MCF 10A (cell line): ENCODE measurements at regions of chr10 and their contacts with region 1.

Region 1: DNA sequence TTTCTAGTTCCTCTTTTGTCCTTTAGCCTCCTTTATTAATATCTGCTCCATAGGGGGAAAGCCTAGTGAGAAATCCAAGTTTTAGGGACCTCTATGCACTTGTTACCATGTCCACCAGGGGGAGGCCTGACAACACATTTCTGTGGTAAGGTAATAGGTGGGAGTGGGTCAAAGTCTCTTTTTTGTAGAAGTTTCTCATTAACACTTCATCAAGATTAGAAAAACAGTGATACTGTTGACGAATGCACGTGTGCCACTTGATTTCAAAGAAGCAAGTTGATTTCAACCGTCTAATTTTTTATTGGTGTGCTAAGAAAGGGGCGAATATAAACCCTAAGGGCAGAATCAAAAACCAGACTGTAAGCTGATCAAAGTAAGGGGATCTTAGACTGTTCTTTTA is 30.6 kb downstream of the CISD1 start:
- DNase-seq: peak; percentile 80
- H3K4me3 Mint-ChIP-seq: no peak overlapping the region
- H3K27ac Mint-ChIP-seq: no peak overlapping the region
- H3K4me1 Mint-ChIP-seq: no peaks in the 10 kb centered on the region
- H3K27me3 Mint-ChIP-seq: peaks cover 40% of the 10 kb centered on the region
- CTCF ChIP-seq: peak; percentile 76

Region 2: DNA sequence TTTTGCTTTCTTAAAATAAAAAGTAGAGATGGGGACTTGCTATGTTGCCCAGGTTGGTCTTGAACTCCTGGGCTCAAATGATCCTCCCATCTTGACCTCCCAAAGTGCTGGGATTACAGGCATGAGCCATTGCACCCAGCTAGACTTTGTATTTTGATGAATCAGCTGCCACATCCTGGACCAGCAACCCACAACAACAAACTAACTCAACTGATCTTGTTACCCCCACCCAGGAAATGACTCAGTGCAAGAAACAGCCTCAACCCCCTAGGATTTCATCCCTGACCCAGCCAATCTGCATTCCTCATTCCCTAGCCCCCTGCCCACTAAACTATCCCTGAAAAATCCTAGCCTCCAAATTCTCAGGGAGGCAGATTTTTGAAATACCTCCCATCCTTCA is 155.6 kb before region 1 on chr10:
- CTCF ChIA-PET with region 1: no interaction called
- POLR2A ChIA-PET with region 1: no interaction called
- intact Hi-C with region 1: no loop called
- DNase-seq: no peak
- H3K4me3 Mint-ChIP-seq: no peak overlapping the region
- H3K27ac Mint-ChIP-seq: no peak overlapping the region
- H3K4me1 Mint-ChIP-seq: no peaks in the 10 kb centered on the region
- H3K27me3 Mint-ChIP-seq: no peaks in the 10 kb centered on the region
- CTCF ChIP-seq: no peak

Region 3: GRCh38 chr10:58311026-58311425 is 11.4 kb after region 1 on chr10:
- CTCF ChIA-PET with region 1: interaction called, 19 read pairs
- POLR2A ChIA-PET with region 1: no interaction called
- intact Hi-C with region 1: no loop called
- DNase-seq: no peak
- H3K4me3 Mint-ChIP-seq: no peak overlapping the region
- H3K27ac Mint-ChIP-seq: no peak overlapping the region
- H3K4me1 Mint-ChIP-seq: no peaks in the 10 kb centered on the region
- H3K27me3 Mint-ChIP-seq: peaks cover 40% of the 10 kb centered on the region
- CTCF ChIP-seq: no peak

Region 4: DNA sequence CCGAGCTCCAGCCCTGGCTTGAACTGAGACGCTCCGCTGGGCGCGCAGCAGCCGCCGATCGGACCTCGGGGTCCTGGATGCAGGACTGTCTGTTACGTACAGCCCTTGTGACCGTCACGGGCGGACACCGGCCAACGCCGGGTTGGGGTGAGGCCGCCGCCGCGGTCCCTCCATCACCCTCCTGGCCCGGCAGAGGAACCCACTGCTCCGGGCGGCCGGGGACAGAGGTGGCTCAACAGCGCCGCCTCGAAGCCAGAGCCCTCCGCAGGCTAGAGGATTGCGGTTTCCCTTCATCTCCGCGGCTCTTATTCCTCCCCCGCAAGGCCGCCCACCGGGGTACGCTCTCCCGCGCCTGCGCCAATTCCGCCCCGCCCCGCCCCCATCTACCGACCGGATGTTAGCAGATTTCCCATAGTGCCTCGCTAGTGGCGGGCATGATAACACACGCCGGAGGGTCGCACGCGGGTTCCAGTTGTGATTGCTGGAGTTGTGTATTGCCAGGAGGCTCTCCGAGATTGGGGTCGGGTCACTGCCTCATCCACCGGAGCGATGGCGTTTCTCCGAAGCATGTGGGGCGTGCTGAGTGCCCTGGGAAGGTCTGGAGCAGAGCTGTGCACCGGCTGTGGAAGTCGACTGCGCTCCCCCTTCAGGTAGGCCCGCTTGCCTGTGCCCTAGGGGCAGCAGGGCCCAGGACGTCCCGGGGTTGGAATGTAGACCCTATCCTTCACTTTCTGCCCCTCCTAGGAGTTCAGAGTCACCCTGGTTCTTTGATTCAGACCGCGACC is 85.6 kb after region 1 on chr10 and contains the start of gene TFAM:
- CTCF ChIA-PET with region 1: interaction called, 68 read pairs
- POLR2A ChIA-PET with region 1: interaction called, 19 read pairs
- intact Hi-C with region 1: loop called (anchors 1 kb)
- DNase-seq: peak; percentile 93
- H3K4me3 Mint-ChIP-seq: peak within 1 kb of the TSS; percentile 86
- H3K27ac Mint-ChIP-seq: peak within 1 kb of the TSS; percentile 86
- H3K4me1 Mint-ChIP-seq: peaks cover 9% of the 10 kb centered on the region
- H3K27me3 Mint-ChIP-seq: no peaks in the 10 kb centered on the region
- CTCF ChIP-seq: peak; percentile 37
- total RNA-seq, gene TFAM: 44.4 and 62.3 TPM in 2 replicates

Region 5: DNA sequence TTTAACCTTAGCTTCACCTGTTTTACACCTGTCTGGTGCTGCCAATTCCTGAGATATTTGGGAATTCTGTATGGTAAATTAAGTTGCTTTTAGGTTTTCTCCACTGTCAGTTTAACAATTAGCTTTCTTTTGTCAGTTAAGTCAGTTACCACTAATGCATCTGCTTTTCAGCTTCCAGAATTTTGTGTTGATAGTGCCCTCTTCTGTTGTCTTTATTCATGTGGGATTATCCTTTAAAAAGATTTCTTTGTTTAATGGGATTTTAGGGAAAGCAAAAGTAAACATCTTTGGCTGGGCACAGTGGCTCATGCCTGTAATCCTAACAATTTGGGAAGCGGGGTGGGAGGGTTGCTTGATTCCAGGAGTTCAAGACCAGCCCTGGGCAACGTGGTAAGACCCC is 93.7 kb after region 1 on chr10:
- CTCF ChIA-PET with region 1: interaction called, 68 read pairs
- POLR2A ChIA-PET with region 1: interaction called, 4 read pairs
- intact Hi-C with region 1: loop called (anchors 1 kb)
- DNase-seq: no peak
- H3K4me3 Mint-ChIP-seq: no peak overlapping the region
- H3K27ac Mint-ChIP-seq: no peak overlapping the region
- H3K4me1 Mint-ChIP-seq: peaks cover 25% of the 10 kb centered on the region
- H3K27me3 Mint-ChIP-seq: no peaks in the 10 kb centered on the region
- CTCF ChIP-seq: no peak

Region 6: DNA sequence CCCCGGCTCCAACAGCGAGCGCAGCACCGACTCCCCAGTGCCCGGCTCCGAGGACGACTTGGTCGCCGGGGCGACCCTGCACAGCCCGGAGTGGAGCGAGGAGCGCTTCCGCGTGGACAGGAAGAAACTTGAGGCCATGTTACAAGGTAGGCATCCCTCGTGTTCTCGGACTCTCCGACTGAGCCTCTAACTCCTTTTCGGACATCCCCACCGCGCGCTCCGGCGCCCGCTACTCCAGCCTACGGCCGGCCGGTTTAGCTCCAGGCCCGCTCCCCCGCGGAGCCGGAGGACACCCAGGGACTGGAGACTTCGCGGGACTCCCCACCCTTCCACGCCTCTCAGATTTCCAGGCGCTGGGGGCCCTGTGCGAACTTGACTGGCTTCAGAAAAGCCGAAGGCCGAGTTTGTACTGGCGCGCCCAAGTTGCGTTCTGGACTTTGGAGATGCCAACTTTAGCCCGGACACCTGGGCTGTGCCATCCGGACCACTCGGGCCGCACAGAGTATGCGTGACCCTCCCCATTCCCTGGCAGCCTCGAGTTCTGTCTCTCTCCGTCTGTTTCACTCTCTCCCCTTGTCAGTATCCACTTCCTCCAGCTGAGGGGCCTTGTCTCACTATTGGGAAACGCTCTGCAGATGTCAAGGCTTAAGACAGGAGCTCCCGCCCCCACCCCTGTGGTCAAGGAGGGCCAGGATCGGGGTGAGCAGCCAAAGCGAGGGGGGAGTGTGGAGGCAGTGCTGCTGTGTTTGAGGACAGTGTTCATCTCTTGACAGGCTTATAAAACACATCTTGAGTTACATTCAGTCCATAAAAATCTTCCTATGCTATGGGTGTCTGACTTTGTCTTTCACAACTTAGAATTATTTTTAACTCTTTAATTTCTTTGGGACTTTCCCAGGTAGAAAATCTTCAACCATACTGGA is 213.9 kb after region 1 on chr10:
- CTCF ChIA-PET with region 1: no interaction called
- POLR2A ChIA-PET with region 1: interaction called, 3 read pairs
- intact Hi-C with region 1: loop called (anchors 10 kb)
- DNase-seq: peak; percentile 73
- H3K4me3 Mint-ChIP-seq: peak overlapping the region; percentile 74
- H3K27ac Mint-ChIP-seq: peak overlapping the region; percentile 89
- H3K4me1 Mint-ChIP-seq: peaks cover 27% of the 10 kb centered on the region
- H3K27me3 Mint-ChIP-seq: no peaks in the 10 kb centered on the region
- CTCF ChIP-seq: no peak